Activated B cell treated with CpG ODN at 0.5 μM for 24 hours (primary cell): ENCODE measurements at regions of chr7 and their contacts with region 1.

Region 1: DNA sequence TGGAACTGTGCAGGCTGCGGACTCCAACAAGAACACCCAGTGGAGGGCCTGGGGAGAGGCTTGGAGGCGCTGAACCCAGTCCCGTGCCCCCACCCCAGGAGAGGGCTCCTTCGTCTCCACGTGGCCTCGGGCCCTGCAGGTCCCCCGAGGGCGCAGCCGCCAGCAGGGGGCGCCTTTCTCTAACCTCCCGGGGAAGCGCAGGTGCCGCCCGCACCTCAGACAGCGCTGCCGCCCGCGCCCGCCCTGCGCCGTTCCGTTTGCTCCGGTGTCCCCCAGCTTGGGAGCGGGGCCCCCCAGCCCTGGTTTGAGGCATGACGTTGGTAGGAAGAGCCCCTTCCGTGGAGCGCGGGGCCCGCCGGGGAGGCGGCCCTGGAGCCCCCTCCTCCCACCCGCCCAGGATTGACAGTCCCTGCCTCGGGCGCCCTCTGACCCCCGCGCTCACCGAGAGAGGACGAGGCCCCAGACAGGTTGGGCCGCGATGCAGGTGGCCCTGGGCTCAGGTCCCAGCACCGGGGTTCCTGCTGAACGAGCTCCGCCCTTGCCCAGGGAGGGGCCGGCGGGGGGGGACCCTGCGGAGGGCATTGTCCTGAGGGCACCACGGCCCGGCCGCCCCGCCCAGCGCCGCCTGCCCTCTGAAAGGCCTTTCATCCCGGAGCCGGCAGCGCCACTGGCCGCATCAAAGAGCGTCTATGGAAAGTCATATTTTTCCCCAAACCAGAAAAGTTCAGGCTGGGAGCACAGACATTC is 42.8 kb downstream of the FOXL3 start:
- DNase-seq: peak; percentile 73
- ATAC-seq: peak; percentile 81
- H3K4me3 Mint-ChIP-seq: no peak overlapping the region
- H3K27ac Mint-ChIP-seq: no peak overlapping the region
- H3K4me1 Mint-ChIP-seq: no peaks in the 10 kb centered on the region
- H3K27me3 Mint-ChIP-seq: peaks cover 16% of the 10 kb centered on the region
- CTCF ChIP-seq: no peak

Region 2: DNA sequence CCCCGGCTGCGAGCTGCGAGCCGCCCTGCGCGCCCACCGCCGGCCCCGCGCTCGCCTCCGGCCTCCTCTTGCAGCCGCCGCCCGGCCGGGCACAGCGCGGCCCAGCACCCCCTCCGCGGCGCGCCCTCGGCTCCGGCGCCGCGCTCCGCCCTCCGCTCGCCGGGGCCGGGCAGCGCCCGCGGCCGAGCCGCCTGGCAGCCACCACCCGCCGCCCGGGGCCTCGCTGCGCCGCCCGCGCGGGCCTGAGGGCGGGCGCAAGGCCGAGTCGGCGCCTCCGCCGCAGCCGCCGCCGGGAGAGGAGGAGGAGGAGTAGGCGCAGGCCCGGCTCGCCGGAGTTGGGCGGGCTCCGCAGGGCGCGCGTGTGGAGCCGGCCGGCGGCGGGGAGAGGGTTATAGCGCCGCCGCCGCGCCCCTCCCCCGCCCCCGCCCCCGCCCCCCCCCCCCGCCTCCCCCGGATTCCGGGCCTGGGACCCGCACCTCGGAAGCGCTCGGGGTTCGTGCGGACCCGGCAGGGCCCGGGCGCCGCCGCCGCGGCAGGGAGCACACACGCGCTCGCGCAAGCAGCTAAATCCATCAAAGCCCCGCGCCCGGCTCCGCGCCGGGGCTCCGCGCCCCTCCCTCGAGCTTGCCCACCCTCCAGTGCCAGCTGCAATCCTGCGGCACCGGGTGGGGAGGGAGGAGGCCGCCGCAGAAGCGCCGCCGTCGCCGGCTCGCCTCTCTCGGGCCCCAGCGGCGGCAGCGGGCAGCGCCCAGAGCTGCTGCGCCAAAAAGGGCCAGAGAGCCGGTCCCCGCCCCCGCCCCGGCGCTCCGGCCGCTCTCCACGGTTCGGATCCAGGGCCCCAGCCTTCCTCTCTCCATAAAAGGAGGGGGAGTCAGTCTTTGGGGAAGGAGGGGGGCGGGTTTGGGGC is 186.9 kb after region 1 on chr7 and contains the start of gene PDGFA:
- CTCF ChIA-PET with region 1: no interaction called
- POLR2A ChIA-PET with region 1: no interaction called
- intact Hi-C with region 1: loop called (anchors 10 kb)
- DNase-seq: peak; percentile 47
- ATAC-seq: peak; percentile 15
- H3K4me3 Mint-ChIP-seq: peak within 1 kb of the TSS; percentile 82
- H3K27ac Mint-ChIP-seq: no peak within 1 kb of the TSS
- H3K4me1 Mint-ChIP-seq: peaks cover 30% of the 10 kb centered on the region
- H3K27me3 Mint-ChIP-seq: peaks cover 8% of the 10 kb centered on the region
- CTCF ChIP-seq: no peak
- total RNA-seq, gene PDGFA: 6.0 and 7.3 TPM in 2 replicates

Region 3: DNA sequence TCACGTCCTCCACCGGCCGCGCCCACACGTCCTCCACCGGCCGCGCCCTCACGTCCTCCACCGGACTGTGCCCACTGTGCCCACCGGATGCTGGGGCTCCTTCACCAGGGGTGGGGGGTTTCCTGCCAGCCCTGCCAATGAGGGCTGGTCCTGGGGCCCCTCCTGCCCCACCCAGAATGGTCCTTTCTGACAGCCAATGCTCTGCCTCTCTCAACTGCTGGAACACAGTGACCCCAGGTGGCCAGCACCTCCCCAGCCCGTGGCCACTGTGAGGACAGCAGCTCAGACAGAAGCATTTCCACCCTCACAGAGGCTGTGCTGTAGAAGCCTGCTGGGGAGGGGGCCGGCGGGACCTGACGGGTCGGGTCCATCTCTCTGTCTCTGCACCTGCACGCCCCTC is 303.6 kb after region 1 on chr7:
- CTCF ChIA-PET with region 1: no interaction called
- POLR2A ChIA-PET with region 1: no interaction called
- intact Hi-C with region 1: loop called (anchors 2 kb)
- DNase-seq: no peak
- ATAC-seq: no peak
- H3K4me3 Mint-ChIP-seq: no peak overlapping the region
- H3K27ac Mint-ChIP-seq: no peak overlapping the region
- H3K4me1 Mint-ChIP-seq: peaks cover 9% of the 10 kb centered on the region
- H3K27me3 Mint-ChIP-seq: no peaks in the 10 kb centered on the region
- CTCF ChIP-seq: no peak

Region 4: GRCh38 chr7:774161-775109 is 441.6 kb after region 1 on chr7:
- CTCF ChIA-PET with region 1: interaction called, 3 read pairs
- POLR2A ChIA-PET with region 1: no interaction called
- intact Hi-C with region 1: loop called (anchors 1 kb)
- DNase-seq: peak; percentile 60
- ATAC-seq: peak; percentile 94
- H3K4me3 Mint-ChIP-seq: no peak overlapping the region
- H3K27ac Mint-ChIP-seq: no peak overlapping the region
- H3K4me1 Mint-ChIP-seq: no peaks in the 10 kb centered on the region
- H3K27me3 Mint-ChIP-seq: no peaks in the 10 kb centered on the region
- CTCF ChIP-seq: peak; percentile 69